SK-N-SH (cell line): ENCODE measurements at regions of chr18 and their contacts with region 1.

Region 1: DNA sequence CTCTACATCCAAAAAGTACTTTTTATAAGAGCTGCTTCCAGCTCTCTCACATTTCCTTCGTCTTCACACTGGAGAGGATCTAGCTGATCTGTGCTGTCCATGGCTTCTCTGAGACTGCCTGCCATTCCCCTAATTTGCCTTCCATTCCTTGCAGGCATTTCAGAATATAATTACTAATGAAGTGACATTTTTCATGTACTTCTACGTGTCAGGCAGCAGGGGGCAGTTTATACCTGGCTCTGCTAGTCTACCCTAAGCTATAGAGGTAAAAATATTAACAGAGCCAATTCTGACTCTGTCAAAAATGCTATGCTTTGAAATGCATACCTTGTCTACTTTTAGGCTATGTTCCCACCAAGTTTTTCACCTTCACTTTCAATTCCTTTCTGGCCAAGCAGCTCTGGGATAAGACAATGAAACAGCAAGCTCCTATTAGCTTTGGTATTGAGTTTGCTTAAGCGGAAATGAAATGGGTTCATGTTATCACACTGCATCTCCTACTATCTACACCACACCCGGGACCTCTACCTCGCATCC is 81.9 kb downstream of the MEP1B start:
- DNase-seq: peak; percentile 62
- H3K4me3 ChIP-seq: no peak overlapping the region; a peak in 1 of 4 replicates
- H3K27ac ChIP-seq: no peak overlapping the region
- H3K4me1 ChIP-seq: peaks cover 0 to 4% of the 10 kb centered on the region in 2 experiments; a peak in 1 of 4 replicates
- H3K27me3 ChIP-seq: no peaks in the 10 kb centered on the region
- CTCF ChIP-seq: peak; percentile 83
- EP300 ChIP-seq: no peak
- RAD21 ChIP-seq: peak; percentile 89

Region 2: GRCh38 chr18:32114293-32114942 is 157.3 kb before region 1 on chr18:
- CTCF ChIA-PET with region 1: no interaction called
- POLR2A ChIA-PET with region 1: no interaction called
- DNase-seq: no peak
- H3K4me3 ChIP-seq: no peak overlapping the region
- H3K27ac ChIP-seq: no peak overlapping the region
- H3K4me1 ChIP-seq: no peaks in the 10 kb centered on the region
- H3K27me3 ChIP-seq: no peaks in the 10 kb centered on the region
- CTCF ChIP-seq: no peak
- EP300 ChIP-seq: no peak
- RAD21 ChIP-seq: no peak

Region 3: GRCh38 chr18:32158108-32158624 is 113.6 kb before region 1 on chr18:
- CTCF ChIA-PET with region 1: interaction called, 34 read pairs
- POLR2A ChIA-PET with region 1: no interaction called
- DNase-seq: peak; percentile 76
- H3K4me3 ChIP-seq: peak overlapping the region in 1 of 2 experiments; percentile 45; a peak in 1 of 4 replicates
- H3K27ac ChIP-seq: no peak overlapping the region
- H3K4me1 ChIP-seq: no peaks in the 10 kb centered on the region; a peak in 1 of 4 replicates
- H3K27me3 ChIP-seq: no peaks in the 10 kb centered on the region
- CTCF ChIP-seq: peak; percentile 84
- EP300 ChIP-seq: no peak
- RAD21 ChIP-seq: peak; percentile 99

Region 4: GRCh38 chr18:32284284-32284683 is 12.5 kb after region 1 on chr18:
- CTCF ChIA-PET with region 1: interaction called, 49 read pairs
- POLR2A ChIA-PET with region 1: no interaction called
- DNase-seq: no peak
- H3K4me3 ChIP-seq: no peak overlapping the region
- H3K27ac ChIP-seq: no peak overlapping the region
- H3K4me1 ChIP-seq: no peaks in the 10 kb centered on the region
- H3K27me3 ChIP-seq: no peaks in the 10 kb centered on the region
- CTCF ChIP-seq: no peak
- EP300 ChIP-seq: no peak
- RAD21 ChIP-seq: no peak

Region 5: GRCh38 chr18:32470713-32471633 is 199.2 kb after region 1 on chr18 and contains the start of gene GAREM1:
- CTCF ChIA-PET with region 1: interaction called, 99 read pairs
- POLR2A ChIA-PET with region 1: interaction called, 5 read pairs
- DNase-seq: peak; percentile 97
- H3K4me3 ChIP-seq: peak within 1 kb of the TSS; percentile 83 to 86
- H3K27ac ChIP-seq: peak within 1 kb of the TSS; percentile 63 to 81; a peak in 3 of 4 replicates
- H3K4me1 ChIP-seq: peaks cover 0 to 20% of the 10 kb centered on the region in 2 experiments; a peak in 2 of 4 replicates
- H3K27me3 ChIP-seq: no peaks in the 10 kb centered on the region
- CTCF ChIP-seq: peak; percentile 60
- EP300 ChIP-seq: peak; percentile 24 to 27; a peak in 1 of 4 replicates
- RAD21 ChIP-seq: peak; percentile 76
- polyA plus RNA-seq, gene GAREM1: 2.8 and 3.3 TPM in 2 replicates

Region 6: DNA sequence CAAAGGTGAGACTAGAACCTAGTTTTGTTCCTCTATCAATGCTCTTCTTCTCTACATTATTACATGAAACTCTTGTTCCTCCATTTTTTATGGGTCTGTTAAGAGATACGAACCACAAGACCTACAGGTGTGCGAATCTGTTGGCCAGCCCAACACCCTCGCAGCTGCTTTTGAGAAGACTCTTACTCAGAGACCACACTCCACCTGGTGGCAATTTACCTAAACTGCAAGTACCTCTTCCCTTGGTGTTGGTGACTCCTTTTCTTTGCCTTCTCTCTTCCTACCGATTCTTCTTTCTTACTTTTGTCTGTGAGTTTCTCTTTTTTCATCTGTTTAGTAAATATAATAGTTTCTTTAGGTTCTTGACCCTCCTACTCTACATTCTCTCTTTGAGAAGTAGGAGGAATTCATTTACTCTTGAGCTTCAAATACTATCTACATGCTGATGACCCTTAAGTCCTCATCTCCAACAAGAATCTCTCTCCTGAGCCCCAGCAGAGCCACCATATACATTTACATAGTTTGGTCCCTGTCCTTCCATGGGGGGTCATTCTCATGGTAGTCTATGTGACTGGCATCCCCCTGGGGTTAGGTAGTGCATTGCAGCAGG is 280.8 kb after region 1 on chr18:
- CTCF ChIA-PET with region 1: interaction called, 52 read pairs
- POLR2A ChIA-PET with region 1: interaction called, 3 read pairs
- DNase-seq: peak; percentile 51
- H3K4me3 ChIP-seq: no peak overlapping the region; a peak in 1 of 4 replicates
- H3K27ac ChIP-seq: no peak overlapping the region
- H3K4me1 ChIP-seq: no peaks in the 10 kb centered on the region
- H3K27me3 ChIP-seq: no peaks in the 10 kb centered on the region
- CTCF ChIP-seq: peak; percentile 62
- EP300 ChIP-seq: no peak
- RAD21 ChIP-seq: peak; percentile 78